ENCODE measurements at regions of chr10 and their contacts with region 1.

Region 1: DNA sequence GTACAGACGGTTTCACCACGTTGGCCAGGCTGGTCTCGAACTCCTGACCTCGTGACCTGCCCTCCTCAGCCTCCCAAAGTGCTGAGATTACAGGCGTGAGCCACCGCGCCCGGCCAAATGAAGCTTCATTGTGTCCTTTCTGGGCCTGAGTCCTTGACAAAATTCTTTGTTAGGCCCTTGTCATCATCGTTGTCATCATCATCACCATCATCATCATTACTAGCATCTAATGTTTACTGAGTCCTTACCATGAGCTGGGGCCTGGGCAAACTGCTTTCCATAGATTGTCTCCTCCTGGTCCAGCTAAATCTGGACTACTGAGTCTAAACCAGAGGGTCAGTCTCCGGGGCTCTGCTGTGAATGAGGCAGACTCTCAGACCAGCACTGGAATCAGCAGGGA is 14.4 kb upstream of the BTRC start:
- DNase-seq: no peak
- ATAC-seq: no peak
- H3K4me3 ChIP-seq: no peak overlapping the region
- H3K27ac ChIP-seq: no peak overlapping the region
- H3K4me1 ChIP-seq: no peaks in the 10 kb centered on the region
- H3K27me3 ChIP-seq: no peaks in the 10 kb centered on the region
- CTCF ChIP-seq: no peak

Region 2: GRCh38 chr10:101297901-101298486 is 41.6 kb before region 1 on chr10:
- CTCF ChIA-PET with region 1: no interaction called
- POLR2A ChIA-PET with region 1: no interaction called
- intact Hi-C with region 1: no loop called
- DNase-seq: peak; percentile 57
- ATAC-seq: peak; percentile 73
- H3K4me3 ChIP-seq: no peak overlapping the region
- H3K27ac ChIP-seq: no peak overlapping the region
- H3K4me1 ChIP-seq: no peaks in the 10 kb centered on the region
- H3K27me3 ChIP-seq: no peaks in the 10 kb centered on the region
- CTCF ChIP-seq: peak; percentile 77

Region 3: DNA sequence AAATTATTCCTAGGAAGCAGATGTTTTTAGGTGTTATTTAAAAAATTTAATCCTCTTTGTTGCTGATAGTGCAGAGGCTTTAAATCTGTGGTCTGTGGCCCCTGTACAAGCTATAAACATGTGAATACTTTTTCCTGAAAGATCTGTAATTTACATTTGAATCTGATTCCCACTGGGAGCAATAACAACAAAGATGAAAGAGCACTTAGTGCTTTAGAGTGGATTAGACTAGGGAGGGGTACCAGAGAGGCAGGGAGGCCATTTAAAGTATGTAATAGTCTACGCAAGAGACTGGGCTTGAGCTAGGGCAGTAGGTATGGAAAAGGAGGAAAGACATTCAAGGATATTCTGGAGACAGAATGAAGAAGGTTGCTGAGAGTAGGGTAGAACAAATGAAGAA is 33.5 kb after region 1 on chr10:
- CTCF ChIA-PET with region 1: no interaction called
- POLR2A ChIA-PET with region 1: no interaction called
- intact Hi-C with region 1: no loop called
- DNase-seq: no peak
- ATAC-seq: no peak
- H3K4me3 ChIP-seq: no peak overlapping the region
- H3K27ac ChIP-seq: no peak overlapping the region
- H3K4me1 ChIP-seq: peaks cover 7% of the 10 kb centered on the region
- H3K27me3 ChIP-seq: no peaks in the 10 kb centered on the region
- CTCF ChIP-seq: no peak

Region 4: DNA sequence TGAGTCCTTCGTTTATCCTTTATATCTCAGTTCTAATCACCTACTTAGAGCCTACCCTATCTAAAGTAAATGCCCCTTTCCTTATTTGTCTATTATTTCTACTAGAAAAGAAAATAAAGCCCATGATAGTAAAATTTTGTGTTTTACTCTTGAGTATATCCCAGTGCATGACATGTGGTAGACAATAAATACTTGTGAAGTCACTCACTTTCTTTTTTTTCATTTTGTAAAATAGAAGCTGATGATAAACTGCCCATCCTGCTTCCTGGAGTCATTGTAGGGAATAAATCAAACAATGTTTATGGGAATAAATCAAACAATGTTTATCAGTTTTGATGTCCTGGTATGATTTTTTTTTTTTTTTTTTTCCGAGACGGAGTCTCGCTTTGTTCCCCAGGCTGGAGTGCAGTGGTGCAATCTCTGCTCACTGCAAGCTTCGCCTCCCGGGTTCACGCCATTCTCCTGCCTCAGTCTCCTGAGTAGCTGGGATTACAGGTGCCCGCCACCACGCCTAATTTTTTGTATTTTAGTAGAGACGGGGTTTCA is 50.5 kb after region 1 on chr10:
- CTCF ChIA-PET with region 1: no interaction called
- POLR2A ChIA-PET with region 1: interaction called, 22 read pairs
- intact Hi-C with region 1: no loop called
- DNase-seq: no peak
- ATAC-seq: peak; percentile 70
- H3K4me3 ChIP-seq: no peak overlapping the region
- H3K27ac ChIP-seq: no peak overlapping the region
- H3K4me1 ChIP-seq: no peaks in the 10 kb centered on the region
- H3K27me3 ChIP-seq: no peaks in the 10 kb centered on the region
- CTCF ChIP-seq: no peak